Panc1 (cell line): ENCODE measurements at regions of chr15 and their contacts with region 1.

Region 1: GRCh38 chr15:82134461-82134860 is 88.6 kb upstream of the MEX3B start:
- DNase-seq: no peak
- ATAC-seq: no peak
- H3K4me3 ChIP-seq: no peak overlapping the region
- H3K27ac ChIP-seq: no peak overlapping the region
- H3K4me1 ChIP-seq: no peaks in the 10 kb centered on the region
- H3K27me3 ChIP-seq: no peaks in the 10 kb centered on the region
- CTCF ChIP-seq: no peak

Region 2: DNA sequence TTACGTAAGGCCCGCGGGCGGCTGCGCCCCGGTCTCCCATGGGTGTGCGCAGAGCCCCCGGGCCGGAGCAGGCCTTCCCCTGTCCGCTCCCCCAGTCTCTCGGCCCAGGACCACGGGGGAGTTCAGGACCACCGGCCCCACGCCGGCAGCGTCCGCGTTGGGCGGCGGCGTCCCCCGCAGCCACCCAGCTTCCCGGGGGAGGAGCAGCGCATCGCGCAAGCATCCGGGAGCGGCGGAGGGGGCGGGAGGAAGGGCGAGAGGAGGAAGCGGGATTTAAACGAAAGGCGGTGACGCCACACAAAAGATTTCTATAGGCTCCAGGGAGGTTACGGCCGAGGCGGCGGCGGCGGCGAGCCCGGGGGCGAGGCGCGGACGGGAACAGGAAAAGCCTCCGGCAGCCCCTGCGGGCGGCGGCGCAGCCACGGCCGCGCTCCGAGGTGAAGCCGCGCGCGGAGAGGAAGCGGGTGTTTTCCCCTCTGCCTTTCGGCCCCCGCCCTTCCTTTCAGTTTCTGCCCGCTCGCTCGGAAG is 1133.8 kb before region 1 on chr15 and contains the start of gene TLNRD1:
- CTCF ChIA-PET with region 1: no interaction called
- POLR2A ChIA-PET with region 1: interaction called, 16 read pairs
- in situ Hi-C with region 1: no loop called
- intact Hi-C with region 1: no loop called
- DNase-seq: no peak
- ATAC-seq: peak; percentile 91
- H3K4me3 ChIP-seq: peak within 1 kb of the TSS; percentile 93 to 94
- H3K27ac ChIP-seq: peak within 1 kb of the TSS; percentile 96
- H3K4me1 ChIP-seq: peaks cover 33% of the 10 kb centered on the region
- H3K27me3 ChIP-seq: no peaks in the 10 kb centered on the region
- CTCF ChIP-seq: no peak
- total RNA-seq, gene TLNRD1: 24.7 TPM

Region 3: GRCh38 chr15:82165948-82166376 is 31.5 kb after region 1 on chr15:
- CTCF ChIA-PET with region 1: no interaction called
- POLR2A ChIA-PET with region 1: no interaction called
- in situ Hi-C with region 1: no loop called
- intact Hi-C with region 1: no loop called
- DNase-seq: no peak
- ATAC-seq: no peak
- H3K4me3 ChIP-seq: no peak overlapping the region
- H3K27ac ChIP-seq: no peak overlapping the region
- H3K4me1 ChIP-seq: no peaks in the 10 kb centered on the region
- H3K27me3 ChIP-seq: no peaks in the 10 kb centered on the region
- CTCF ChIP-seq: no peak